HCT116 (cell line): ENCODE measurements at regions of chr17 and their contacts with region 1.

Region 1: DNA sequence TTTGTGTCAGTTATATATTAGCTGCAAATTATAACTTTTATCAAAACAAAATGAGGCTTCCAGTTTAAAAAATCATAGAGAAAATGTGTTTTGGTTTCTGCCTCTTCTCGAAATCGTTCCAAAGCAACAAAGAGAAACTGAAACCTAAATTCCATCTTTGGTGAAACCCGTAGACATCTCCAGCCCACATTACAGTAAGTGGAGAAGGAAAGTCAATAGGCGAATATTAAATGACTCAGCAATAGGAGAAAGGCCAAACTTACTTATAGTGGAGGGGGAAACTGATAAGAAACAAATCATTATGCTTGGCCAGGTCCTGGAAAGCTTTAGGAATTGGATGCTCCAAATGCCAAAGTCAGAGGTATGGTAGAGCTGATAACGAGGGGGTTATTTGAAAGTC is 103.0 kb upstream of the SHISA6 start:
- DNase-seq: no peak
- ATAC-seq: no peak
- H3K4me3 ChIP-seq: no peak overlapping the region
- H3K27ac ChIP-seq: no peak overlapping the region
- H3K4me1 ChIP-seq: no peaks in the 10 kb centered on the region
- H3K27me3 ChIP-seq: no peaks in the 10 kb centered on the region
- CTCF ChIP-seq: no peak
- POLR2A ChIP-seq: no peak
- RAD21 ChIP-seq: no peak

Region 2: DNA sequence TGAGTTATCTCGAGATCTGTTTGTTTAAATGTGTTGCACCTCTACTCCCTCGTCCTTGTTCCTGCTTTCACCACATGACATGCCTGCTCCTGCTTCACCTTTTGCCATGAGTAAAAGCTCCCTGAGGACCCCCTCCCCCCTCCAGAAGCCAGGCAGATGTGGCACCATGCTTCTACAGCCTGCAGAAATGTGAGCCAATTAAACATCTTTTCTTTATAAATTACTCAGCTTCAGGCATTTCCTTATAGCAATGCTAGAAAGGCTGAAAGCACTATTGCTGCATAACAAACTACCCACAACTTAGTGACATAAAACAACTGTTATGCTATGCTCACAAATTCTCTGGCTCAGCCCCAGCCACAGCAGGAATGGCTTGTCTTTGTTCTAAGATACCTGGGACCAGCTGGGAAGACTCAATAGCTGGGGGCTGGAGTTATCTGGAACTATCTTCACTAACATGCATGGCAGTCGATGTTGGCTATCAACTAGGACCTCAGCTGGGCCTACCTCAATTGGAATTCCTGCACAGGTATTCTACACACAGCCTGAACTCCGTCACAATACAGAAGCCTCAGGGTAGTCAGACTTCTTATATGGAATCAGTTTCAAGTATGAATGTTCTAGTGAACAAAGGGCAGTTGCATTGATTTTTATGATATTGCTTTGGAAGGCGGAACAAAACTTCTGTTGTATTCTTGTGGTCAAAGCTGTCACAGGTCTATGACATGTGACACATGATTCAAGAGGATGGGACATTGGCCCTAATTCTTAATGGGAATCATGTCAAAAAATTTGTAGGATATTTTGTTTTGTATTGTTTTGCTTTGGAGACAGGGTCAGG is 114.2 kb before region 1 on chr17:
- CTCF ChIA-PET with region 1: no interaction called
- POLR2A ChIA-PET with region 1: no interaction called
- RAD21 ChIA-PET with region 1: no interaction called
- intact Hi-C with region 1: no loop called
- DNase-seq: no peak
- ATAC-seq: no peak
- H3K4me3 ChIP-seq: no peak overlapping the region
- H3K27ac ChIP-seq: no peak overlapping the region
- H3K4me1 ChIP-seq: no peaks in the 10 kb centered on the region
- H3K27me3 ChIP-seq: no peaks in the 10 kb centered on the region
- CTCF ChIP-seq: no peak
- POLR2A ChIP-seq: no peak
- RAD21 ChIP-seq: no peak

Region 3: GRCh38 chr17:11074451-11074850 is 63.6 kb before region 1 on chr17:
- CTCF ChIA-PET with region 1: no interaction called
- POLR2A ChIA-PET with region 1: no interaction called
- RAD21 ChIA-PET with region 1: no interaction called
- intact Hi-C with region 1: loop called (anchors 10 kb)
- DNase-seq: no peak
- ATAC-seq: no peak
- H3K4me3 ChIP-seq: no peak overlapping the region
- H3K27ac ChIP-seq: no peak overlapping the region
- H3K4me1 ChIP-seq: no peaks in the 10 kb centered on the region
- H3K27me3 ChIP-seq: no peaks in the 10 kb centered on the region
- CTCF ChIP-seq: no peak
- POLR2A ChIP-seq: no peak
- RAD21 ChIP-seq: no peak